PC-9 (cell line): ENCODE measurements at regions of chr20 and their contacts with region 1.

Region 1: DNA sequence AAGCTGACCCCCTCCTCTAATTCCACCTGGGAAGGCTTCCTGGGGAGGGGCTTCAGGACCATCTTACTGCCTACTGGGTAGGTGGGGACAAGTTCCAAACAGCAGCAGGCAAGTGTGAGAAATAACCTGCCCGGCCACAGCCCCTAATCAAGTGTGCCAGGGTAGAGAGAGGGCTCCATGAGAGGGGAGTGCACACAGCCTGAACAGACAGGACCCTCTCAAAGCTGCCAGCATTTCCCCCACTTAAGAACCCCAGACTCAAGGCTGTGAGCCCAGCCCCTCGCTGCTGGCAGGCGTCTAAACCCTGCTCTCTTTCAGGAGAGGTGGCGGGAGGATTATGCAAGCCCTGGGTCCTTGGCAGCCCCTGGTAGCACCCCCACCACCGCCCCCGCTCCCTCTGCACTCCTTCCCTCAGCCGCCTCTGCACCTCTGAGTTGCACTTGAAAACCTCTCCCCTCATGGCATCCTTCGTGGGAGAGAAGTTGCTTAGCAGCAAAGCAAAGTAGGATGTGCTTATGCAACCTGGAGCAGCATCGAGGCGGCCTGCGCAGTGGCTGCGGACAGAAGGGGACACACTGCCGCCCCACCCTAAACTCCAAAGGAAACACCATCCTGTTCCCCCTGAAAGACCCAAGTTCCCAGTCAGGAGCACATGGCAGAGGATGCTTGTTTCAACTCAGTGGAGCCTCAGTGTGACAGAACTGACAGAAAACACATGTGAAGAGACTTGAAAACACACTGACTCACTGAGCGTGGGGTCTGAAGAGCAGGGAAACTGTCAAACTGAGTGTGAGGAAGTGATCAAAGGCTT is 10.5 kb downstream of the DDRGK1 start:
- DNase-seq: no peak
- H3K4me3 ChIP-seq: no peak overlapping the region
- H3K27ac ChIP-seq: no peak overlapping the region
- H3K4me1 ChIP-seq: no peaks in the 10 kb centered on the region
- H3K27me3 ChIP-seq: no peaks in the 10 kb centered on the region
- CTCF ChIP-seq: no peak

Region 2: GRCh38 chr20:3227506-3227905 is 33.5 kb after region 1 on chr20:
- CTCF ChIA-PET with region 1: no interaction called
- POLR2A ChIA-PET with region 1: interaction called, 21 read pairs
- intact Hi-C with region 1: no loop called
- DNase-seq: peak in 1 of 2 experiments; percentile 91
- H3K4me3 ChIP-seq: no peak overlapping the region
- H3K27ac ChIP-seq: no peak overlapping the region
- H3K4me1 ChIP-seq: no peaks in the 10 kb centered on the region
- H3K27me3 ChIP-seq: no peaks in the 10 kb centered on the region
- CTCF ChIP-seq: no peak

Region 3: GRCh38 chr20:4840801-4841200 is 1646.8 kb after region 1 on chr20:
- CTCF ChIA-PET with region 1: no interaction called
- POLR2A ChIA-PET with region 1: interaction called, 11 read pairs
- intact Hi-C with region 1: no loop called
- DNase-seq: no peak
- H3K4me3 ChIP-seq: no peak overlapping the region
- H3K27ac ChIP-seq: no peak overlapping the region
- H3K4me1 ChIP-seq: no peaks in the 10 kb centered on the region
- H3K27me3 ChIP-seq: peaks cover 4% of the 10 kb centered on the region; the same call in 1 of the 2 replicates
- CTCF ChIP-seq: no peak